ENCODE measurements at regions of chr1 and their contacts with region 1.

Region 1: DNA sequence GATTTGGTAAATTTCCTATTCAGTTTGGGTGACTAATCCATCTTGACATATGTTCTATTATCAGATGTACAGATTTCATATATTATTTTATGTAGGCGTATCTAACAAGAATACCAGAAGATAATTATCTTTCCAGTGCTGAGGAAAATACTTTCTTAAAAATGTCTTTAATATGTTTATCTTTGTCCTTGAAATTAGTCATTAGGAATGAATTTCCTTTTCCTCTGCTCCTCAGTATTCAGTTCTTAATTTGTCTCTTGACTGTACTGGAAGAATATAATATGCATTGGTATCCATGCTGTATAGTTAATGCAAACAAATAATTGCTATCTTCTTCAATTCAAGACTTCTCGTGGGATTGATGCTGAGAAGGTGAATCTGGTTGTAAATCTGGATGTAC is 6.6 kb downstream of the DDX20 start:
- DNase-seq: no peak
- H3K4me3 ChIP-seq: no peak overlapping the region
- H3K27ac ChIP-seq: peak overlapping the region in 1 of 2 experiments; percentile 41; a peak in 1 of 4 replicates
- H3K4me1 ChIP-seq: peaks cover 0 to 14% of the 10 kb centered on the region in 2 experiments; a peak in 1 of 4 replicates
- H3K27me3 ChIP-seq: no peaks in the 10 kb centered on the region
- CTCF ChIP-seq: no peak
- EP300 ChIP-seq: no peak
- RAD21 ChIP-seq: no peak

Region 2: DNA sequence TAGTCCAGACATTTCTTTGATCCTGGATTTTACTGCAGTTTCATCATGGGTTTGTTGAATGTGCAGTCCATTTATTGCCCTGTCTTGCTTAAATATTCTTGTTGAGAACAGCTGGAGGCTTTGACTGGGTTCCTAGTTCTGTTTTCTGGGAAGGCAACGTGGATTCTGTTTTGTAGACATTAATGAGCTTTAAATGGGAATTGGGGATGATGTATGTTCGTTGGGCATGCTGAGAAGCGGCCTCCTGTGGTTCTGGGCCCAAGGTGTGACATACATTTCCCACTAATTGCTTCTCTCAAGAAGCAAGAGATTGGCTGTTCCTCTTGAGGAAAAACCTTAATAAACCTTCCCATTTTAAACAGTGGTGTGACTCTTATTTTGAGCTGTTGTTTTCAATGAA is 46.0 kb before region 1 on chr1:
- CTCF ChIA-PET with region 1: interaction called, 52 read pairs
- POLR2A ChIA-PET with region 1: no interaction called
- DNase-seq: no peak
- H3K4me3 ChIP-seq: no peak overlapping the region
- H3K27ac ChIP-seq: no peak overlapping the region
- H3K4me1 ChIP-seq: no peaks in the 10 kb centered on the region
- H3K27me3 ChIP-seq: no peaks in the 10 kb centered on the region
- CTCF ChIP-seq: no peak
- EP300 ChIP-seq: no peak
- RAD21 ChIP-seq: no peak

Region 3: DNA sequence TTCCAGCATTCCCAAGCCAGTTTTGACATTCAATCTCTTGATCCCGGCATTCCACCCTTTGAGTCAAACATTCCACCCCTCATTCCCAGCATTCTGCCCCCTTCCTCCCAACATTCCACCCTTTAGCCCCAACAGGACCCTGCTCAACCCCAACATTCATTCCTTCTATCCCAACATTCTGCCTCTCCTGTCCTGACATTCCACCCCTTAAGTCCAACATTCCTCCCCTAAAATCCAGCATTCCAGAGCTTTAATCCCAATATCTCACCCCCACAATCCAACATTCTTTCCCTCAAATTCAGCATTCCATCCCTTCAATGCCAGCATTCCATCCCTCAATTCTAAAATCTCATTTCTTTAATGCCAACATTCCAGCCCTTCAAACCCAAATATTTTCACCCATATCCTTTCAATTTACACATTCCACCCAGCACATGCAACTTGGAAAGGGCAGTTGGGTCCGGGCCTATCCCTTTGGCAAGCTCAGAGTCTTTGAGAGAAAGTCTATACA is 16.3 kb after region 1 on chr1:
- CTCF ChIA-PET with region 1: no interaction called
- POLR2A ChIA-PET with region 1: no interaction called
- DNase-seq: no peak
- H3K4me3 ChIP-seq: no peak overlapping the region
- H3K27ac ChIP-seq: no peak overlapping the region
- H3K4me1 ChIP-seq: no peaks in the 10 kb centered on the region
- H3K27me3 ChIP-seq: no peaks in the 10 kb centered on the region
- CTCF ChIP-seq: no peak
- EP300 ChIP-seq: no peak
- RAD21 ChIP-seq: no peak

Measured in SK-N-SH (cell line).